HepG2 (cell line): ENCODE measurements at regions of chr10 and their contacts with region 1.

Region 1: DNA sequence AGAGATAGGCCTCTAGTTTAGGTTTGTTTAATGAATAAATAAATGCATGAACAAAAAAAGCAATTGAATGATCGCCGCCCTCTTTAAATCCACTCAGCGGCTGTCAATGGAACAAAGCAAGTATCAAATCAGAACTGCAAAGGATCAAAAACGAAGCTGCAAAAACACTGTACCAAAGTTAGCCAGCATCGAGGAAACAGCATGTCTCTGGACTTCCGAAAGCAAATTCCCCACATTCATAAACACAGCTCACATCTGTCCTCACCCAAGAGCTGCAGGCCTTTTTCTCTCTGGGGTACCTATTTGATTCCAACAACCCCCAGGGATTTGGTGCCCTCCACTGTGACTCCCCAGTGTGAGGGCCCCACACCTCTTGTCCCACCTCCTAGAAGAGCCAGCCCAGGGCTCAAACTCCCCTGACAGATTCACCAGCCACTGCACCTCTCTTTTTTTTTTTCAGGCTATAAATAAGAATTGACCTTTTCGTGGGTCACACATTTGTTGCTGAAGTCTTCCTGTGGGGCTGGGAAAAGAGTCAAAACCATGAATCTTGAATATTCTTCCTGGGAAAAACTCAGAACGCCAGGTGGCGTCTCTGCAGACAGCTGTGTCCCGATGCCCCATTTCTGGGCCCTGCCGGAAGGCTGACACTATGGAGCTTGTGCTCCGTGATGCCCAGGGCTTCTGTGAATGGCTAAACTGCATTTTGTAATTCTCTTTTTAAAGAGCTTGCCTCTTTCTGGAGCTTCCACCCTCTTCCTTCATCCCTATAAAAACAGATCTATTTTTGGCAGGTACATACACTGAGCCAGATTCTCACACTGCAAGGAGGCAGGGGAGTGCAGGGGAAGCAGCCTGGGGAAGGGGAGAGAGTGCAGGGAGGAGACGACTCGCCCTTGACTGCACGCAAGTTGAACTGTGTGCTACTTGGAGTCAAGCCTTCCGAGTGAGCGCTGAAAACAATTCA is 51.7 kb downstream of the HSPA12A start:
- DNase-seq: no peak
- ATAC-seq: peak; percentile 22; the same call in 1 of the 3 replicates
- H3K4me3 ChIP-seq: no peak overlapping the region
- H3K27ac ChIP-seq: no peak overlapping the region
- H3K4me1 ChIP-seq: peaks cover 23% of the 10 kb centered on the region
- H3K27me3 ChIP-seq: no peaks in the 10 kb centered on the region
- CTCF ChIP-seq: peak; percentile 40; the same call in 1 of the 2 replicates
- EP300 ChIP-seq: no peak
- POLR2A ChIP-seq: no peak
- RAD21 ChIP-seq: 0 out of 2 replicates have a peak, but pooled peaks have one; percentile 41

Region 2: GRCh38 chr10:116553378-116553980 is 137.2 kb before region 1 on chr10:
- CTCF ChIA-PET with region 1: no interaction called
- POLR2A ChIA-PET with region 1: no interaction called
- in situ Hi-C with region 1: no loop called
- intact Hi-C with region 1: no loop called
- DNase-seq: no peak
- ATAC-seq: no peak
- H3K4me3 ChIP-seq: no peak overlapping the region
- H3K27ac ChIP-seq: no peak overlapping the region
- H3K4me1 ChIP-seq: no peaks in the 10 kb centered on the region
- H3K27me3 ChIP-seq: no peaks in the 10 kb centered on the region
- CTCF ChIP-seq: no peak
- EP300 ChIP-seq: no peak
- POLR2A ChIP-seq: no peak
- RAD21 ChIP-seq: no peak

Region 3: GRCh38 chr10:116728526-116729096 is 38.0 kb after region 1 on chr10:
- CTCF ChIA-PET with region 1: no interaction called
- POLR2A ChIA-PET with region 1: no interaction called
- in situ Hi-C with region 1: no loop called
- intact Hi-C with region 1: loop called (anchors 1 kb)
- DNase-seq: no peak
- ATAC-seq: no peak
- H3K4me3 ChIP-seq: no peak overlapping the region
- H3K27ac ChIP-seq: no peak overlapping the region
- H3K4me1 ChIP-seq: peaks cover 27% of the 10 kb centered on the region
- H3K27me3 ChIP-seq: no peaks in the 10 kb centered on the region
- CTCF ChIP-seq: no peak
- EP300 ChIP-seq: no peak
- POLR2A ChIP-seq: no peak
- RAD21 ChIP-seq: no peak

Region 4: DNA sequence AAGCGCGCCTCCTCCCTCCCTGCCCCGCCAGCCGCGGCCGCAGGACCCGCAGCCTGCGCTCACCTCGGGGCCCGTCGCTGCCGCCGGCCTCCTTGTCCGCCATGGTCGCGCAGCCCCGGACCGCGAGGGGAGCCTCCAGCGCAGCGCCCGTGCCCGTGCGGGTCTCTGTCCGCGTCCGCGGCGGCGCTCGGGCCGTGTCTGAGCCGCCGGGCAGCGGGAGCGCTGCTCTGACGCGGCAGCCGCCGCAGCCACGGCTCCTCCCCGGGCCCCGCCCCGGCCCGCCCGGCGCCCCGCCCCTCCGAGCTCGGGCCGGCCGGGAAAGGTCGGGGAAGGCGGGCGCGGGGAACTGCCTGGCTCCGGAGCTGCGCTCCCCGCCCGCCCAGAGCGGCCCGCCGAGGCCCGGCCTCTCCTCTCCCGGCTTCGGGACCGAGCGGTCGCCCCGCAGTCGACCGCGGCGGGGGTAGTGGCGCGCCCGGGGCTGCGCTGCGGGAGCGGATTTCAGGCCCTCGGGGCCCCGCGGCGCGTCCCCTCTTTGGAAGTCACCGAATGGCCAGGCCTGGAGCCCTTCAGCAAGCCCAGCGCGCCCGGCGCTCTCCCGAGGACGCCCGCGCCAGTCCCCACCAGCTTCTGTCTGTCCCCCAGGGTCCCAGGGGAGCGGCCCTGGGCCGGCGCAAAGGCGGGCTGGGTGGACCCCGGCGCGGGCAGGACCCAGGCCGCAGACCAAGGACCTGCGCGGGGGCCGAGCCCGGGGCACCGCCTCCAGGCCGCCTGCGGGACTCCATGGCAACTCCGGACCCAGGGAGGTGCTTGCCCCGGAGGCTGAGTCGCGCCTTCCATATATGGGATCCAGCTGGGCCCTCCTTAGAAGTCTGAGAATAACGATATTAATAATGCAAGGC is 52.0 kb after region 1 on chr10 and contains the start of gene HSPA12A:
- CTCF ChIA-PET with region 1: no interaction called
- POLR2A ChIA-PET with region 1: interaction called, 3 read pairs
- in situ Hi-C with region 1: no loop called
- intact Hi-C with region 1: loop called (anchors 5 kb)
- DNase-seq: no peak
- ATAC-seq: peak; percentile 89
- H3K4me3 ChIP-seq: peak within 1 kb of the TSS; percentile 71 to 80 (median 74)
- H3K27ac ChIP-seq: peak within 1 kb of the TSS; percentile 44
- H3K4me1 ChIP-seq: peaks cover 49% of the 10 kb centered on the region
- H3K27me3 ChIP-seq: peaks cover 0 to 23% of the 10 kb centered on the region in 2 experiments; a peak in 3 of 5 replicates
- CTCF ChIP-seq: no peak
- EP300 ChIP-seq: no peak
- POLR2A ChIP-seq: peak in 1 of 2 experiments; percentile 84; a peak in 2 of 4 replicates
- RAD21 ChIP-seq: peak; percentile 27; the same call in 1 of the 2 replicates
- total RNA-seq, gene HSPA12A: 12.9 and 13.6 TPM in 2 replicates